IMR-90 (cell line): ENCODE measurements at regions of chr3 and their contacts with region 1.

Region 1: GRCh38 chr3:44198284-44199269 is 43.1 kb upstream of the TOPAZ1 start:
- DNase-seq: peak; percentile 67
- ATAC-seq: peak; percentile 95
- H3K4me3 ChIP-seq: no peak overlapping the region
- H3K27ac ChIP-seq: no peak overlapping the region
- H3K4me1 ChIP-seq: no peaks in the 10 kb centered on the region
- H3K27me3 ChIP-seq: peaks cover 4% of the 10 kb centered on the region
- CTCF ChIP-seq: peak; percentile 86
- POLR2A ChIP-seq: no peak
- RAD21 ChIP-seq: peak; percentile 90

Region 2: GRCh38 chr3:42961633-42962032 is 1236.9 kb before region 1 on chr3:
- CTCF ChIA-PET with region 1: no interaction called
- POLR2A ChIA-PET with region 1: no interaction called
- dilution Hi-C with region 1: no loop called
- in situ Hi-C with region 1: loop called (anchors 25 kb)
- intact Hi-C with region 1: loop called (anchors 2 kb)
- DNase-seq: peak; percentile 56
- ATAC-seq: peak; percentile 87
- H3K4me3 ChIP-seq: no peak overlapping the region
- H3K27ac ChIP-seq: no peak overlapping the region
- H3K4me1 ChIP-seq: no peaks in the 10 kb centered on the region
- H3K27me3 ChIP-seq: no peaks in the 10 kb centered on the region; the same call in 1 of the 2 replicates
- CTCF ChIP-seq: peak; percentile 65
- POLR2A ChIP-seq: no peak
- RAD21 ChIP-seq: peak; percentile 62

Region 3: GRCh38 chr3:43223670-43224364 is 974.8 kb before region 1 on chr3:
- CTCF ChIA-PET with region 1: no interaction called
- POLR2A ChIA-PET with region 1: interaction called, 3 read pairs
- dilution Hi-C with region 1: no loop called
- in situ Hi-C with region 1: no loop called
- intact Hi-C with region 1: loop called (anchors 5 kb)
- DNase-seq: peak; percentile 27
- ATAC-seq: peak; percentile 27; the same call in 1 of the 2 replicates
- H3K4me3 ChIP-seq: no peak overlapping the region
- H3K27ac ChIP-seq: no peak overlapping the region
- H3K4me1 ChIP-seq: no peaks in the 10 kb centered on the region
- H3K27me3 ChIP-seq: peaks cover 6% of the 10 kb centered on the region; the same call in 1 of the 2 replicates
- CTCF ChIP-seq: peak; percentile 64
- POLR2A ChIP-seq: no peak
- RAD21 ChIP-seq: peak; percentile 70

Region 4: GRCh38 chr3:43690400-43691119 is 508.0 kb before region 1 on chr3 and contains the start of gene ABHD5:
- CTCF ChIA-PET with region 1: no interaction called
- POLR2A ChIA-PET with region 1: no interaction called
- dilution Hi-C with region 1: no loop called
- in situ Hi-C with region 1: no loop called
- intact Hi-C with region 1: loop called (anchors 2 kb)
- DNase-seq: peak; percentile 95
- ATAC-seq: peak; percentile 90
- H3K4me3 ChIP-seq: peak within 1 kb of the TSS; percentile 87
- H3K27ac ChIP-seq: peak within 1 kb of the TSS; percentile 66
- H3K4me1 ChIP-seq: peaks cover 6% of the 10 kb centered on the region
- H3K27me3 ChIP-seq: no peaks in the 10 kb centered on the region
- CTCF ChIP-seq: peak; percentile 41; the same call in 1 of the 2 replicates
- POLR2A ChIP-seq: peak; percentile 99
- RAD21 ChIP-seq: peak; percentile 27
- total RNA-seq, gene ABHD5: 33.2 and 33.6 TPM in 2 replicates

Region 5: DNA sequence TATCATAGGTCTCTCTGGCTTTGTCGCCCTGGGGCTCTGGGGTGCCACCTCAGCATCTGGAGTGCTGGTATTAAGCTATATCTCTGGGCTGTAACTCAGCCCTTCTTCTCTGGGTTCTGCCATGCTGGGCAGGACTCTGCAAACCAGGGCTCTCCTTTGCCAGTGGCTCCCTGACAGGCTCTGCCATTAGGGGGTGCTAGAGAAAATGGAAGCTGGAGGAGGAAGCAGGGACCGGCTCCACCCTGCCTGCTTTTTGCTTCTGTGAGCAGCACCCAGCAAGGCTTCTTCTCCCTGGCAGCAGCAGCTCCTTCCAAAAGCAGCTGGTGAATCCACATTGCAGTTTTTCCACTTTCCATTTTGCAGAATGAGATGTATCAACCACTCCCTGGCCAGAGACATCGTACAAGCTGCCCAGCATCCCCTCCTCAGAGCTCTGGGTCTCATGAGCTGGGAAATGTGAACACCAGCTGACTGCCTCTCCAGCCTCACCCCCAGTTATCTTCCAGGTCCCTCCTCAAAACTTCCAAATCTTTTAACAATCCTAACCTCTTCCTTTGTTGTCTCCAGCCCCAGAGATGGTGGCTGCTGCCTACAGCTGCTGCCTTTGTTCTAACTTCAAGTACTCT is 342.8 kb before region 1 on chr3:
- CTCF ChIA-PET with region 1: interaction called, 5 read pairs
- POLR2A ChIA-PET with region 1: no interaction called
- dilution Hi-C with region 1: no loop called
- in situ Hi-C with region 1: no loop called
- intact Hi-C with region 1: loop called (anchors 5 kb)
- DNase-seq: peak; percentile 56
- ATAC-seq: peak; percentile 85
- H3K4me3 ChIP-seq: no peak overlapping the region
- H3K27ac ChIP-seq: no peak overlapping the region
- H3K4me1 ChIP-seq: peaks cover 9% of the 10 kb centered on the region
- H3K27me3 ChIP-seq: peaks cover 2% of the 10 kb centered on the region; the same call in 1 of the 2 replicates
- CTCF ChIP-seq: peak; percentile 68
- POLR2A ChIP-seq: no peak
- RAD21 ChIP-seq: peak; percentile 75

Region 6: GRCh38 chr3:44554626-44555592 is 356.3 kb after region 1 on chr3 and contains the start of gene ZKSCAN7:
- CTCF ChIA-PET with region 1: no interaction called
- POLR2A ChIA-PET with region 1: no interaction called
- dilution Hi-C with region 1: no loop called
- in situ Hi-C with region 1: no loop called
- intact Hi-C with region 1: no loop called
- DNase-seq: peak; percentile 40
- ATAC-seq: peak; percentile 90
- H3K4me3 ChIP-seq: peak within 1 kb of the TSS; percentile 95
- H3K27ac ChIP-seq: peak within 1 kb of the TSS; percentile 85
- H3K4me1 ChIP-seq: peaks cover 4% of the 10 kb centered on the region; the same call in 1 of the 2 replicates
- H3K27me3 ChIP-seq: no peaks in the 10 kb centered on the region
- CTCF ChIP-seq: 0 out of 2 replicates have a peak, but pooled peaks have one; percentile 15
- POLR2A ChIP-seq: no peak
- RAD21 ChIP-seq: no peak
- total RNA-seq, gene ZKSCAN7: 4.7 TPM in 2 replicates